ENCODE measurements at regions of chr2 and their contacts with region 1.

Region 1: DNA sequence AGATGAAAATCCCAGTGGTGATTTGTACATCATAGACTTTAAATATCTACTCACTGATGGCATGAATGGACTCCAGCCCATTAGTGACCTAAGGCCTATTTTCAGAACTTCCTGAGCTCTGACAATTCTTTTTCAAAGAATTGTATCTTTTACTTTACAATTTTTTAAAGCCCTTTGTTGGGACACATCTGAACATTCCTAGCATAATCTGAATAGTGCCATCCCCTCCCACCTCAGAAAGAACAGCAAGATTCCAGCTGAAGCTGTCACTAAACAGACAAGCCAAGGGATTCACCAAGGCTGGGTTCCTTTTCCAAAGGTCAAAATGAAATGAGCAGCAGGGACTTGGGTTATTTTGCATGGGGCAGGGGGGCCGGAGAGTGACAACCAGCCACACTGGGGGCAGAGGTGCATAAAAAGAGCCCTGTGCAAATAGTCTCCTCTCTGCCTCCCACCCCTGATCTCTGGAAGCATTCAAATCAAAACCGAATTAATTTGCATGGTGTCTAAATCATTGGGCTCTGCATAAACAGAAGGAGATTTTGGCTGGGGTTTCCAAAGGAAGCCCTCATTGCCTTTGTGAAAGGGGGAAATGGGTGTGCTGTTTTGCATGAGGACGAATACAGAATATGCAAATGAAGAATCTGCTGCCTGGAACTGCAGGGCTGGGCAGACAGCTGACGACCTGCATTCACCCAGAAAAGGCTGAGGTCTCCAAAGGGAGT is 17.2 kb downstream of the EPHA4 start:
- DNase-seq: no peak
- H3K4me3 ChIP-seq: no peak overlapping the region
- H3K27ac ChIP-seq: peak overlapping the region; percentile 12 to 49
- H3K4me1 ChIP-seq: peaks cover 0 to 5% of the 10 kb centered on the region in 2 donors
- H3K27me3 ChIP-seq: no peaks in the 10 kb centered on the region
- CTCF ChIP-seq: no peak
- POLR2A ChIP-seq: no peak

Region 2: GRCh38 chr2:221372159-221372884 is 182.6 kb before region 1 on chr2:
- intact Hi-C with region 1: loop called (anchors 10 kb)
- DNase-seq: no peak
- H3K4me3 ChIP-seq: no peak overlapping the region
- H3K27ac ChIP-seq: no peak overlapping the region
- H3K4me1 ChIP-seq: no peaks in the 10 kb centered on the region
- H3K27me3 ChIP-seq: no peaks in the 10 kb centered on the region
- CTCF ChIP-seq: no peak
- POLR2A ChIP-seq: no peak